K562 (cell line): ENCODE measurements at regions of chr16 and their contacts with region 1.

Region 1: DNA sequence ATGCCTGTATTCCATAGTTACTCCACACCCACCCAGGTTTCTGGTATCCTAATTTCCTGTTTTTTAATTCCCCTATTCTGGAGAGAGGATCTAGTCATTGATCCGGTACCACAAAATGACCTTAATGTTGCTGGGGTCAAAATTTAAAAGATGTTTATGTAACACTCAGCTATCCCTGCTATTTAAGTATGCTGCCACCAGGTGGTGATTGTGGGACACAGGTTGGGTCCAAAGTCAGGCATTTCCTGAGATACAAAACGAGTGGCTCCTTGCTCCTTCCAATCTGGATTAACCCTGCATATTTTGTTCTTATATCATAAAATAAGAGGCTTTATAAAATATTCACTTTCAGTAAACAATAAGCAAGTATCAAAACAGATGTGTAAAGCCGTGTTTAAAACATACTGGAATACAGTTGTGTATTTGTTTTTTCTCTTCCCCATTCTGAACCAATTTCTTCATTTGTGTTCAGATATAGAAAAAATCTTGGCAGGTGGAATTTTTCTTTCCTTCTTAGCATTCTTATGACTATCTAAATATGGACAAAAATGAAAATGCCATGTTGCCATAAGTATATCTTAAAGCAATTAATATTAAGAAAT is 16.3 kb downstream of the HS3ST4 start:
- DNase-seq: peak; percentile 50 to 64 (median 60)
- ATAC-seq: peak; percentile 72
- H3K4me3 ChIP-seq: no peak overlapping the region
- H3K27ac ChIP-seq: no peak overlapping the region
- H3K4me1 ChIP-seq: no peaks in the 10 kb centered on the region
- H3K27me3 ChIP-seq: peaks cover 6 to 9% of the 10 kb centered on the region in 2 experiments; a peak in 3 of 5 replicates
- CTCF ChIP-seq: peak; percentile 58 to 70 (median 70)
- EP300 ChIP-seq: no peak
- POLR2A ChIP-seq: no peak
- RAD21 ChIP-seq: peak; percentile 37 to 67; a peak in 3 of 4 replicates

Region 2: GRCh38 chr16:25721439-25721838 is 13.4 kb after region 1 on chr16:
- CTCF ChIA-PET with region 1: no interaction called
- POLR2A ChIA-PET with region 1: no interaction called
- in situ Hi-C with region 1: no loop called
- intact Hi-C with region 1: loop called (anchors 1 kb)
- DNase-seq: no peak
- ATAC-seq: no peak
- H3K4me3 ChIP-seq: no peak overlapping the region
- H3K27ac ChIP-seq: no peak overlapping the region
- H3K4me1 ChIP-seq: no peaks in the 10 kb centered on the region
- H3K27me3 ChIP-seq: peaks cover 4 to 6% of the 10 kb centered on the region in 2 experiments; a peak in 3 of 5 replicates
- CTCF ChIP-seq: no peak
- EP300 ChIP-seq: no peak
- POLR2A ChIP-seq: no peak
- RAD21 ChIP-seq: no peak

Region 3: GRCh38 chr16:25747160-25747758 is 39.2 kb after region 1 on chr16:
- CTCF ChIA-PET with region 1: no interaction called
- POLR2A ChIA-PET with region 1: no interaction called
- in situ Hi-C with region 1: no loop called
- intact Hi-C with region 1: no loop called
- DNase-seq: peak; percentile 15 to 38 (median 21)
- ATAC-seq: no peak
- H3K4me3 ChIP-seq: no peak overlapping the region
- H3K27ac ChIP-seq: no peak overlapping the region
- H3K4me1 ChIP-seq: no peaks in the 10 kb centered on the region
- H3K27me3 ChIP-seq: no peaks in the 10 kb centered on the region; a peak in 1 of 5 replicates
- CTCF ChIP-seq: no peak
- EP300 ChIP-seq: no peak
- POLR2A ChIP-seq: no peak
- RAD21 ChIP-seq: no peak